ENCODE measurements at regions of chr15 and their contacts with region 1.

Region 1: GRCh38 chr15:41621200-41622193 is 38.7 kb upstream of the MGA start:
- DNase-seq: peak; percentile 94 to 96
- H3K4me3 ChIP-seq: peak overlapping the region; percentile 76
- H3K4me3 Mint-ChIP-seq: peak overlapping the region; percentile 97
- H3K27ac Mint-ChIP-seq: peak overlapping the region; percentile 95
- H3K4me1 ChIP-seq: peaks cover 9% of the 10 kb centered on the region; the same call in 1 of the 2 replicates
- H3K4me1 Mint-ChIP-seq: no peaks in the 10 kb centered on the region
- H3K27me3 ChIP-seq: no peaks in the 10 kb centered on the region
- H3K27me3 Mint-ChIP-seq: no peaks in the 10 kb centered on the region
- CTCF ChIP-seq: no peak

Region 2: DNA sequence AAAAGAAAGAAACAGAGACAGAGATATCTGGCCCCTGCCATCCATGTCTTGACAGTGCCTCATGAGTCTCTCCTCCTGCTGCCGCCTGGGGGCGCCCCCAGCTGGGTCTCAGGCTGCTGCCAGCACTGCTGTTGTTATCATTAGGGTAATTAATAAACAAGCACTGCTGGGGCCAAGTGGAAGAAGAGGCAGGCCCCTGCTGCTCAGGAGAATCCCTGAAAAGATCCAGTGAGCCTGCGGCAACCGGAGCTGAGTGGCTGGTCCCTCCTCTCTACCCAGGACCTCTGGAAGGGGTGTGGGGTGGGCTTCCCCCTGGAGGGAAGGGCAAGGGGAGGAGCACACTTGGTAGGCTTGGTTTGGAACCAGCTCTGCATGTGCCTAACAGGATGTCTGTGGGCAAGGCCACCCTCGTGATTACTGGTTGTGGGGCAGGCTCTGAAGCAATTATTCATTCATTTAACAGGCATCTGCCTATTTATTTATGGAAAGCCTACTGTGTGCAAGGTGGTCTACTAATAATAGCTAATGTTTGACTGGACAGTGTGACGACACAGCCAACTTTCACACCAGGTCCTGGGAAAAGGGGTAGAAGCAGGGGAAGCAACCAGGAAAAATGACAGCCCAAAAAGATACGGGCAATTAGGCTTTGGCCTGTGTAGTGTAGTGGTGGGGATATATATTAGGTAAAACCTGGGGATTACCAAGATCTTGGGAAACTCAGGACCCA is 63.7 kb before region 1 on chr15:
- CTCF ChIA-PET with region 1: interaction called, 5 read pairs
- POLR2A ChIA-PET with region 1: interaction called, 7 read pairs
- intact Hi-C with region 1: loop called (anchors 2 kb)
- DNase-seq: peak; percentile 73 to 79
- H3K4me3 ChIP-seq: peak overlapping the region; percentile 56
- H3K4me3 Mint-ChIP-seq: peak overlapping the region; percentile 94
- H3K27ac Mint-ChIP-seq: peak overlapping the region; percentile 91
- H3K4me1 ChIP-seq: peaks cover 38% of the 10 kb centered on the region
- H3K4me1 Mint-ChIP-seq: peaks cover 27% of the 10 kb centered on the region
- H3K27me3 ChIP-seq: no peaks in the 10 kb centered on the region
- H3K27me3 Mint-ChIP-seq: no peaks in the 10 kb centered on the region
- CTCF ChIP-seq: peak; percentile 82 to 92

Region 3: GRCh38 chr15:41594801-41595746 is 26.4 kb before region 1 on chr15:
- CTCF ChIA-PET with region 1: no interaction called
- POLR2A ChIA-PET with region 1: interaction called, 14 read pairs
- intact Hi-C with region 1: no loop called
- DNase-seq: no peak
- H3K4me3 ChIP-seq: no peak overlapping the region
- H3K4me3 Mint-ChIP-seq: no peak overlapping the region
- H3K27ac Mint-ChIP-seq: no peak overlapping the region
- H3K4me1 ChIP-seq: peaks cover 20% of the 10 kb centered on the region
- H3K4me1 Mint-ChIP-seq: peaks cover 28% of the 10 kb centered on the region
- H3K27me3 ChIP-seq: no peaks in the 10 kb centered on the region
- H3K27me3 Mint-ChIP-seq: no peaks in the 10 kb centered on the region
- CTCF ChIP-seq: no peak

Region 4: GRCh38 chr15:41603941-41604911 is 17.3 kb before region 1 on chr15:
- CTCF ChIA-PET with region 1: interaction called, 6 read pairs
- POLR2A ChIA-PET with region 1: interaction called, 5 read pairs
- intact Hi-C with region 1: loop called (anchors 1 kb)
- DNase-seq: peak; percentile 49 to 61
- H3K4me3 ChIP-seq: no peak overlapping the region
- H3K4me3 Mint-ChIP-seq: peak overlapping the region; percentile 25
- H3K27ac Mint-ChIP-seq: peak overlapping the region; percentile 74
- H3K4me1 ChIP-seq: peaks cover 49% of the 10 kb centered on the region
- H3K4me1 Mint-ChIP-seq: peaks cover 48% of the 10 kb centered on the region
- H3K27me3 ChIP-seq: no peaks in the 10 kb centered on the region
- H3K27me3 Mint-ChIP-seq: no peaks in the 10 kb centered on the region
- CTCF ChIP-seq: peak; percentile 42 to 51

Region 5: GRCh38 chr15:41660235-41661077 is 39.0 kb after region 1 on chr15 and contains the start of gene MGA:
- CTCF ChIA-PET with region 1: interaction called, 5 read pairs
- POLR2A ChIA-PET with region 1: interaction called, 15 read pairs
- intact Hi-C with region 1: loop called (anchors 1 kb)
- DNase-seq: peak; percentile 95 to 96
- H3K4me3 ChIP-seq: peak within 1 kb of the TSS; percentile 87
- H3K4me3 Mint-ChIP-seq: peak within 1 kb of the TSS; percentile 92
- H3K27ac Mint-ChIP-seq: peak within 1 kb of the TSS; percentile 88
- H3K4me1 ChIP-seq: peaks cover 18% of the 10 kb centered on the region
- H3K4me1 Mint-ChIP-seq: peaks cover 22% of the 10 kb centered on the region
- H3K27me3 ChIP-seq: no peaks in the 10 kb centered on the region
- H3K27me3 Mint-ChIP-seq: no peaks in the 10 kb centered on the region
- CTCF ChIP-seq: peak in 1 of 2 experiments; percentile 23
- total RNA-seq, gene MGA: 59.6 and 60.0 TPM in 2 replicates

Region 6: DNA sequence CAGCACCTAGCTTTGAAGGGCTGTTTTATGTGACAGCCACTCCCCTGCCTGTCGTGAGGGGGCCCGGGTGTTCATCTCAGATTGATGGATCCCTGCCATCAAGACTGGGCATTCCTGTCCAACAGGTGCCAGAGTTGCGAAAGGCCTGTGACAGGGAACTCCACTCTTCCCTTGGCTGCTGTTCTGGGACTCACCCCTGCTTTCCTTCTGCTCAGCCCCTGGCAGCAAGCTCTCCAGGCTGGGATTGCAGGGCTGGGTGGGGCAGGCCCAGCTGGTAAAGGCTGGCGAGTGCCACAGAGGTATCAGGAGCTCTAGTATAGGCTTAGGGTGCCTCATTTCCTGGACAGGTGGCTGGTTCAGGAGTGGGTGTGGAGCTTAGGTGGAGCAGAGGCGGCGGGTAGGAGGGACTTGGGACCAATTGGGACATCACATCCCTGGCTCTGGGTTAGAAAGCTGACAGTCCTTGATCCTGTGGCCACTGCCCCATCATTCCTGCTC is 217.0 kb after region 1 on chr15 and contains the start of gene PLA2G4B:
- CTCF ChIA-PET with region 1: no interaction called
- POLR2A ChIA-PET with region 1: no interaction called
- intact Hi-C with region 1: no loop called
- DNase-seq: peak; percentile 62 to 64
- H3K4me3 ChIP-seq: no peak within 1 kb of the TSS
- H3K4me3 Mint-ChIP-seq: no peak within 1 kb of the TSS
- H3K27ac Mint-ChIP-seq: no peak within 1 kb of the TSS
- H3K4me1 ChIP-seq: no peaks in the 10 kb centered on the region
- H3K4me1 Mint-ChIP-seq: no peaks in the 10 kb centered on the region
- H3K27me3 ChIP-seq: no peaks in the 10 kb centered on the region
- H3K27me3 Mint-ChIP-seq: no peaks in the 10 kb centered on the region
- CTCF ChIP-seq: no peak
- total RNA-seq, gene PLA2G4B: 5.8 and 6.0 TPM in 2 replicates